ENCODE measurements at regions of chr3 and their contacts with region 1.

Region 1: GRCh38 chr3:16264708-16265454 is at the starts of genes DPH3 and OXNAD1:
- DNase-seq: peak; percentile 99 to 100
- H3K4me3 ChIP-seq: peak within 1 kb of the TSS; percentile 65 to 84
- H3K27ac ChIP-seq: peak within 1 kb of the TSS; percentile 81 to 88
- H3K4me1 ChIP-seq: peaks cover 0 to 25% of the 10 kb centered on the region in 2 donors
- H3K27me3 ChIP-seq: no peaks in the 10 kb centered on the region
- CTCF ChIP-seq: peak in 1 of 3 experiments; percentile 16
- total RNA-seq, gene DPH3: 5.5 TPM
- total RNA-seq, gene OXNAD1: 6.9 TPM

Region 2: GRCh38 chr3:16550676-16551341 is 285.9 kb after region 1 on chr3:
- intact Hi-C with region 1: loop called (anchors 1 kb)
- DNase-seq: peak in 1 of 2 donors; percentile 89
- H3K4me3 ChIP-seq: peak overlapping the region in 1 of 2 donors; percentile 40
- H3K27ac ChIP-seq: no peak overlapping the region
- H3K4me1 ChIP-seq: no peaks in the 10 kb centered on the region
- H3K27me3 ChIP-seq: no peaks in the 10 kb centered on the region
- CTCF ChIP-seq: peak; percentile 84 to 88 (median 87)

Measured in ascending aorta (tissue), 2 donors.